ENCODE measurements at regions of chr20 and their contacts with region 1.

Region 1: GRCh38 chr20:4119854-4120209 is 104.5 kb upstream of the RNF24 start:
- DNase-seq: no peak
- ATAC-seq: no peak
- H3K4me3 ChIP-seq: no peak overlapping the region
- H3K27ac ChIP-seq: peak overlapping the region; percentile 51; the same call in 2 of the 3 replicates
- H3K4me1 ChIP-seq: peaks cover 5 to 19% of the 10 kb centered on the region in 2 experiments
- H3K27me3 ChIP-seq: no peaks in the 10 kb centered on the region
- CTCF ChIP-seq: no peak
- EP300 ChIP-seq: no peak
- POLR2A ChIP-seq: no peak
- RAD21 ChIP-seq: no peak

Region 2: GRCh38 chr20:3987296-3987695 is 132.5 kb before region 1 on chr20:
- CTCF ChIA-PET with region 1: no interaction called
- POLR2A ChIA-PET with region 1: no interaction called
- in situ Hi-C with region 1: no loop called
- intact Hi-C with region 1: no loop called
- DNase-seq: no peak
- ATAC-seq: no peak
- H3K4me3 ChIP-seq: no peak overlapping the region
- H3K27ac ChIP-seq: no peak overlapping the region
- H3K4me1 ChIP-seq: peaks cover 0 to 7% of the 10 kb centered on the region in 2 experiments; a peak in 3 of 5 replicates
- H3K27me3 ChIP-seq: no peaks in the 10 kb centered on the region
- CTCF ChIP-seq: no peak
- EP300 ChIP-seq: no peak
- POLR2A ChIP-seq: no peak
- RAD21 ChIP-seq: no peak

Region 3: DNA sequence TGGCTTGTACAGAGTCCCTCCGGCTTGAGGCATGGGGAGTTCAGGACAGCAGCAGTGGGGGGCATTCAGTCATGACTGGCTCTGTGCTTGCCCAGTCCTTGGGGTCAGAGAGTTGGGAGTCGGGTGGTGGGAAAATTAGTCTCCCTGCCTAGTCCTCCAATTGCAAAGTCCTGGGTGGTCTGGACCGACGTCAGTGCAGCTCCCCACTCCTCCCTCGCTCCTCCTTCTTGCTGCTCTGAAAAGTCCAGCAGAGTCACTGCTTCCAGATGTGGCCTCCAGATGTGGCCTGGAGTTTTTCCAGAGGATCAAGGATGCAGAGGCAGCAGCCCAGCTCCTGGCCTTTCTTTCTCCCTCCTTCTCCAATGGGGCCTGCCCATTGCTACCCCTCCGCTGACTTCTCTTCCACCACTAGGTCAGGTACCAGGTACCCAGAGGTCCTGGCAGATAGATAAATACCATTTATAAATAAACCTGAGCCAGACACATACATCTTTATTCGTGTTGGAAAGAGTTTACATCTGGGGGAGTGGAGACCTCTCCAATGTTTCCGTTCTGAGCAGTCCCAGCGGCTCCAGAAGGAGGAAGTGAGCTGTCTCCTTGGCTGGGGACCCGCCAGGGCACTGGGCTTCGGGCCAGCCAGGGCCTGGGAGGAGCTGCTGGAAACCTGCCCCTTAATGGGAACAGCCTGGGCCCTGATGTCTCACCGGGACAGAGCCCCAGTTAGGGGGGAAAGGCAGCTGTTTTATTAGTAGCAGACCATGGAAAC is 55.5 kb before region 1 on chr20:
- CTCF ChIA-PET with region 1: no interaction called
- POLR2A ChIA-PET with region 1: no interaction called
- in situ Hi-C with region 1: no loop called
- intact Hi-C with region 1: no loop called
- DNase-seq: peak; percentile 39 to 76 (median 56)
- ATAC-seq: peak; percentile 78
- H3K4me3 ChIP-seq: no peak overlapping the region
- H3K27ac ChIP-seq: peak overlapping the region; percentile 74
- H3K4me1 ChIP-seq: peaks cover 35 to 58% of the 10 kb centered on the region in 2 experiments
- H3K27me3 ChIP-seq: no peaks in the 10 kb centered on the region
- CTCF ChIP-seq: no peak
- EP300 ChIP-seq: no peak
- POLR2A ChIP-seq: no peak
- RAD21 ChIP-seq: no peak

Region 4: DNA sequence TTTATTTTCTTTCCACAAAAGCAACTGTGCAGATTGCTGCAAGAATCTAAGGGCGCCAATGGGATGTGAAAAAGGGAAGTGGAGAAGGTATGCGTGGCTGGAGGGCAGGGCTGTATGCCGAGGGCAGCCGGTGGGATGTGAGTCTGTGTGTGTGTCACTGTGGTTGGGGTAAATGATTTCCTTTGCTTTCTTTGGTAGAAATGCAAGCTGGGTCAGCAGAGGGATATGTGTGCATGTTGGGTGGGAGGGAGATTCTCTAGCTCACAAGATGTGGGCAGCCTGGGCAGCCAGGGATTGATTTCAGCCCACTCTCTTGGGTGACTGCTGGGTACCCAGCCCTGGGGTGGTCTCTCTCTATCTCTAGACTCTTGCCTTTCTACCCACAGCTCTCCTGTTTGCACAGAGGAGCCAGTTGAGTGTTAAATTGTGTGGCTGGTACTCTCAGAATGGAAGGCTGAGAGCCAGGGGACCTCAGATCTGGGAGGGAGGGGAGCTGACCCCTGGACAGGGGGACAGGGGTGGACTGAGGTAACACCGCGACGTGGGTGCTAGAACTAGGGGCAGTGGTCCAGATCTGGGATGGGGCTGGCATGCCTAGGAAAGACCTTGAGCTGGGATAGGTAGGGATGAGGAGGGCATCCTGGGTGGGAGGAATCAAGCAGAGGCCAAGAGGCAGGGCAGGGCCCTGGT is 32.3 kb after region 1 on chr20:
- CTCF ChIA-PET with region 1: no interaction called
- POLR2A ChIA-PET with region 1: no interaction called
- in situ Hi-C with region 1: no loop called
- intact Hi-C with region 1: loop called (anchors 5 kb)
- DNase-seq: no peak
- ATAC-seq: no peak
- H3K4me3 ChIP-seq: no peak overlapping the region
- H3K27ac ChIP-seq: no peak overlapping the region
- H3K4me1 ChIP-seq: peaks cover 5 to 25% of the 10 kb centered on the region in 2 experiments; a peak in 4 of 5 replicates
- H3K27me3 ChIP-seq: no peaks in the 10 kb centered on the region
- CTCF ChIP-seq: no peak
- EP300 ChIP-seq: no peak
- POLR2A ChIP-seq: no peak
- RAD21 ChIP-seq: no peak

Measured in K562 (cell line).